Activated CD4-positive, alpha-beta T cell treated with anti-CD3 and anti-CD28 coated beads, Interleukin-2, amount 10 ng/mL, durations not matched to agents 24 days and 14 days (primary cell): ENCODE measurements at regions of chr6 and their contacts with region 1.

Region 1: GRCh38 chr6:6588064-6588923 is at the start of gene LY86:
- DNase-seq: peak; percentile 79
- H3K4me3 Mint-ChIP-seq: peak within 1 kb of the TSS; percentile 84
- H3K27ac Mint-ChIP-seq: peak within 1 kb of the TSS; percentile 92
- H3K4me1 Mint-ChIP-seq: peaks cover 73% of the 10 kb centered on the region
- H3K27me3 Mint-ChIP-seq: no peaks in the 10 kb centered on the region
- total RNA-seq, gene LY86: 1.2 TPM in 2 replicates

Region 2: DNA sequence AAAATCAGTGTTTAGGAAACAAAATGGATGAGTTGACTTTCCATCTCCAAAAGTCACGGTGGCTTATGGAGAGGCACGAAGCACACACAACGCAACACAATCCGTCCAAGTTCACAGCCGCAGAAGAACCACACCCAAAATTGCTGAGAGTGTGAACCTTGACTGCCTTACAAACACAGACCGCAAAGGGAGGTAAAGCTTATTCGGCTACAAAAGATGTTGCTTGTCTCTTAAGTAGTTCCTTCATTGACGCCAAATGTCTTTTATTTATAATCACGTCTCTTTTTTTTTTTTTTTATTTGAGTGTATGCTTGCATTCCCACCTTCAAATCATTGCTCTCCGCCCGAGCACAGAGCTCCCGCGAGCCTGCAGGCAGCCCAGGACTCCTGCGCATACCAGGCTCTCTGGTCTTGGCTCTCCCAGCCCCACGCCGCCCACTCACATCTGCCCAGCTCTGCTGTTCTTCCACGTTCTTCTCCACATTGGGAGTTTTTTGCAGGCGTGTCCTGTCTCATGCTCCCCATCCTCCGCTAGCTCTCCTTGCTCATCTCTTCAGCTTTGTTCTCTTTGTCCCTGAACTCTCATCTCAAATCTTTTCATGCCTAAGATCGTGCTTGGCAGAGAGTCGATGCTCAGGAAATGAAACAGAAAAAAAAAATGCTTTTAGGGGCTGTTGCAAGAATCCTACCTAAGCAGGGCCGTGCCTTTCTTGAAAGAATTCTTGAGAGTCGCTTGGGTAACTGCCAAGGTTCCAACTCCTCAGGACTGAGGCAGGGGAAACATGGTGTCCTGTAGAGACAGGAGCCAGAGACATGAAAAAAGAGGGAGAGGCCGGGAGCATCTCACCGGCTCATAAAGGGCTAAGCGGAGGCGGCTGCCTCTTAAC is 26.0 kb after region 1 on chr6:
- intact Hi-C with region 1: loop called (anchors 2 kb)
- DNase-seq: peak; percentile 85
- H3K4me3 Mint-ChIP-seq: peak overlapping the region; percentile 81
- H3K27ac Mint-ChIP-seq: peak overlapping the region; percentile 86
- H3K4me1 Mint-ChIP-seq: peaks cover 68% of the 10 kb centered on the region
- H3K27me3 Mint-ChIP-seq: no peaks in the 10 kb centered on the region